ENCODE measurements at regions of chr17 and their contacts with region 1.

Region 1: DNA sequence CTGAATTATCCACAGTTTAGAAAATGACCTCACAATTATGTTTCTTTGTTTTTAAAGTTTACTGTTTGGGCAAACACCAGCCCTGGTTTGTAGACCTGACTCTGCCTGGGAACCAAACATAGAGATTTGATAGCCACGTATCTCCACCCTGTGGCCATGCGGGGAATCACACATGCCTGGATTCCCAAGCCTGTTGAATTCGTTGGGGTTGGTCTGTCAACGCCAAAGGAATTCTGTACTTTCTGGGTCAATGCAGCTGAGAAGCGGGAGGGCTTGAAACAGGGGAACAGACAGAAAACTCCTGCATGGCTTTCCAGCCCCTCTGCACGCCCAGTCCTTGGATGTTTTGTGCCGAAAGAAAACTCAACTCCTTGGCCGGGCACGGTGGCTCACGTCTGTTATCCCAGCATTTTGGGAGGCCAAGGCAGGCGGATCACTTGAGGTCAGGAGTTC is 27.0 kb downstream of the CD300A start:
- DNase-seq: peak; percentile 78
- H3K4me3 ChIP-seq: no peak overlapping the region
- H3K27ac ChIP-seq: no peak overlapping the region
- H3K4me1 ChIP-seq: no peaks in the 10 kb centered on the region
- H3K27me3 ChIP-seq: no peaks in the 10 kb centered on the region
- CTCF ChIP-seq: peak; percentile 94

Region 2: DNA sequence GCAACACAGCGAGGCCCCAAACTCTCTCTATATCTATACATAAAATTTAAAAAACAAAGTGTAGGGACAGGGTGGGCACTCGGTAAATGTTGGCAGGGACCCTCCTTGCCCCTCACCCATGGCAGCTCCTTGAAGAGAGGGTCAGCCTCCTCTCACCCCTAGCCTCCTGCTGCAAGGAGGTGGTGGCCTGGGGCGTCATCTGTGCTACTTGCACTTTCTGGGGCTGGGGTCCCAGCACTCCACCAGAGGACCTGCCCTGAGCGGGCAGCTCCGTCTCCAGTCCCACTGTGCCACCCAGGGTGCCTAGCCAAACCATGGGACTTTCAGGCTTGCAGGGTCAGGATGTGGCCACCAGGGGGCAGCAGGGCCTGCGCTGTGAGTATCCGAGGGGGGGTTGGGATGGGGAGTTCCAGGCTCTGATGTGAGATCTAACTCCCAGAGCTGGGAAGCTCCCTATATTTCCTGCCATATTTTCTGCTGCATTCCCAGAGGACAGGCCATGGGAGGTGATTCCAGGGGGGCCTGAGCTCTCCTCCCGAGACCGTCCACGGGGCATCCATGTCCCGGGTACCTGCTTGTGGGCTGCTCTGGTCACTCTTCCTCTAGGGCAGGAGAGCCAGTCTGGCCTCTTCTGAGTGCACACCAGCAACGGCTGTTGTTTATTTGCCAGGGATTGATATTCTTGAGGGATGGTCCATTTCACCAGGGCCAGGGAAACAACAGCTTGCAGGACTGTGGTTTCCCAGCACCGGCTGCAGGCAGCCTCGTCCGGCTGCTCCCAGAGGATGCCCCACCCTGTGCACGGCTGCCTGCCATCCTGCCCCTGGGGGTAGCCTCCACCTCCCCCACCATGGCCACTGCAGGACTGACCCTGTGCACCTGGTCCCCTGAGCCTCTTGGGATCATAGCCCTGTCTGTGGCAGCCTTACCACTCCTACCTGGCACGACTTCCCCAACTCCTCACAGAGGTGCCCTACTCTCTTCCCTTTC is 125.0 kb before region 1 on chr17:
- intact Hi-C with region 1: loop called (anchors 2 kb)
- DNase-seq: peak; percentile 83
- H3K4me3 ChIP-seq: no peak overlapping the region
- H3K27ac ChIP-seq: no peak overlapping the region
- H3K4me1 ChIP-seq: peaks cover under 1% of the 10 kb centered on the region
- H3K27me3 ChIP-seq: no peaks in the 10 kb centered on the region
- CTCF ChIP-seq: peak; percentile 94

Measured in colonic mucosa (tissue), 4 donors.